Right lobe of liver (tissue), 6 donors: ENCODE measurements at regions of chr15 and their contacts with region 1.

Region 1: DNA sequence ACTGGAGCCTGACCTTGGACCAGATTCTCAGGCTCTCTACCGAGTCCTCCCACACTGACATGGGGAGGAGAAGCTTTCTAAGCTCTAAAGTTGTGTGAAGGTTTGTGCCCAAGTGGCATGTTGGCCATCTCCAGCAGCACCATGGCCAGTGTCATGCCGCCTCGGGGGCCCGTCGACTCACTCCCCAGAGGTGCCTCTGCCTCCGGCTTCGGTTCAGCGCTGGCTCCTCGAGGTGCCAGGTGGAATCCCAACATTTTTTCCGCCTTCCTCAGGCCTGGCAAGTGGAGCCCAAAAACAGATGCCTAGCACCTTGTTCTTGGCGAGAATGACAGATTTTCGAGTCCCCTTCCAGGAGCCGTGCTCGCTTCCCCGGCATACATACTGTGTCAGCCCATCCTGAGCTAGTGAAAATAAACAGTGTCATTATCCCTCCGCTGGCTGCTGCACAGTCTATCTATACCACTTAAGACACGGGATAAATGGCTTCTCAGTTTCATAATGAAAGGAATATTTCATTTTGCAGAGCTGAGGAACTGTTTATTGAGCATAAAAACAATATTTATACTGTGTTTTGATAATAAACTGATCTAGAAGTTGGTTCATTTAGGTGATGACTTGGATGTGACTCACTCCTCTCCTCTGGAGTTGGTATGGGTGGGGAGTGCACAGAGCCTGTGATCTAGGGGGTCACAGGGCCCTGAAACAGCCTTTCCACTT is 328.5 kb upstream of the TLE3 start:
- DNase-seq: no peak
- ATAC-seq: no peak
- H3K4me3 ChIP-seq: no peak overlapping the region
- H3K27ac ChIP-seq: no peak overlapping the region
- H3K4me1 ChIP-seq: peaks cover 0 to 35% (median 13%) of the 10 kb centered on the region in 4 donors
- H3K27me3 ChIP-seq: no peaks in the 10 kb centered on the region
- CTCF ChIP-seq: no peak
- POLR2A ChIP-seq: no peak

Region 2: DNA sequence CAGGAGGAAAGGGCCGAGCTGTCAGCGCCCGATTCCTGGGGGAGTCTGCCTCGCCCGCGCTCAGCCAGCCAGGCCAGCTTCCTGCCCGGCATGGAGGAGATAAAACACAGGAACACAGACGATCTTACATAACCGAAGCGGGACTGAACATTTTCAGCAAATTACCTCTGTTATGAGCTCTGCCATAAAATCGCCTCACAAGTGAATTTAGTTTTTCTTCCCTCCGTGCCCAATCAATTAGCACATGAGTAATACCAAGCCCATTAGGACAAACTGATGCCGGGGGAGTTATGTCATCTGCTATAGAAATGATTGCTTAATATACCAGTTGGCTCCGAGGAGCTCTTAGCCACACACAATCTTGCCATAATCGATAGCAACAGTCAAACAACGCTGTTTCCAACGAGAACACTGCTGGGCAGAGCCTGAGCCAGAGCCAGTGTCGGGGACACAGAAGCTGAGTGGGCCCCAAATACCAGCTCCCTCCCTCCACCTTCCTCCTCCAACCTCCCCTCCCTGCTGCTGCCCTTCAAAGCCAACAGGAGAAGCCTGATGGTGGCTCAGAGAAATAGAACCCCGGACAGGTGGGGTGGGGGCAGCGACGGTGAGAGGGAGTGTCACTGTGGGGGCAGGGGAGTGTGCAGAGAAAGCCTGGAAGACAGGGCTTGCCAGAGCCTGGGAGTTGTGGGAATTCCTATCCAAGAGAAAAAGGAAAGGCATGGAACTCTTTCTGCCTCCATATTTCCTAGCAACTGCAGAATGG is 49.2 kb before region 1 on chr15:
- intact Hi-C with region 1: loop called in 1 of 2 experiments (anchors 10 kb)
- DNase-seq: peak; percentile 56 to 77 (median 74)
- ATAC-seq: peak; percentile 87 to 95 (median 88)
- H3K4me3 ChIP-seq: peak overlapping the region in 2 of 3 donors; percentile 23 to 32
- H3K27ac ChIP-seq: peak overlapping the region in 2 of 3 donors; percentile 43 to 56
- H3K4me1 ChIP-seq: peaks cover 0 to 18% (median 6%) of the 10 kb centered on the region in 4 donors
- H3K27me3 ChIP-seq: no peaks in the 10 kb centered on the region
- CTCF ChIP-seq: no peak
- POLR2A ChIP-seq: no peak

Region 3: DNA sequence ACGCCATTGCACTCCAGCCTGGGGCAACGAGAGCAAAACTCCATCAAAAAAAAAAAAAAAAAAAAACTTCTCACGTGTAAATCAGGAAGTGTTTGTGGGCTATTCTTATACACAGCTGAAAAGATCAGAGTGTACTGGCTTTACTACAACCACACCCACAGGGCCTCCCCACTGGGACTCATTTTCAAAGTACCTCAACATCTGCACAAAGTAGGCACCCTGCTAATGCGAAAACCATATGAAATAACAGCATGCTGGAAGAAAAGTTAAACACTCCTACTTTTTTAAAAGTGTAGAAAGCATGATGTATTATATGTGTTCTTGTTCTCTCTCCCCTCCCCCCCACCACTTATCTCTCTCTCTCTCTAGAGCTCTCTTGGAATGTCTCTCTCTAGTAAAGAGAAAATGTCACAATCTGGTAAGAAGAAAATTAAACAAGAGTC is 326.0 kb after region 1 on chr15:
- intact Hi-C with region 1: no loop called
- DNase-seq: no peak
- ATAC-seq: peak in 1 of 4 donors; percentile 35
- H3K4me3 ChIP-seq: no peak overlapping the region
- H3K27ac ChIP-seq: no peak overlapping the region
- H3K4me1 ChIP-seq: no peaks in the 10 kb centered on the region
- H3K27me3 ChIP-seq: no peaks in the 10 kb centered on the region
- CTCF ChIP-seq: no peak
- POLR2A ChIP-seq: no peak